WTC11 (cell line): ENCODE measurements at regions of chr2 and their contacts with region 1.

Region 1: GRCh38 chr2:198296665-198297308 is 492.4 kb downstream of the PLCL1 start:
- DNase-seq: peak; percentile 63
- ATAC-seq: peak; percentile 94
- H3K4me3 Mint-ChIP-seq: peak overlapping the region; percentile 37
- H3K27ac Mint-ChIP-seq: no peak overlapping the region
- H3K4me1 Mint-ChIP-seq: peaks cover 9% of the 10 kb centered on the region
- H3K27me3 Mint-ChIP-seq: no peaks in the 10 kb centered on the region; the same call in 1 of the 2 replicates
- CTCF ChIP-seq: peak; percentile 72

Region 2: DNA sequence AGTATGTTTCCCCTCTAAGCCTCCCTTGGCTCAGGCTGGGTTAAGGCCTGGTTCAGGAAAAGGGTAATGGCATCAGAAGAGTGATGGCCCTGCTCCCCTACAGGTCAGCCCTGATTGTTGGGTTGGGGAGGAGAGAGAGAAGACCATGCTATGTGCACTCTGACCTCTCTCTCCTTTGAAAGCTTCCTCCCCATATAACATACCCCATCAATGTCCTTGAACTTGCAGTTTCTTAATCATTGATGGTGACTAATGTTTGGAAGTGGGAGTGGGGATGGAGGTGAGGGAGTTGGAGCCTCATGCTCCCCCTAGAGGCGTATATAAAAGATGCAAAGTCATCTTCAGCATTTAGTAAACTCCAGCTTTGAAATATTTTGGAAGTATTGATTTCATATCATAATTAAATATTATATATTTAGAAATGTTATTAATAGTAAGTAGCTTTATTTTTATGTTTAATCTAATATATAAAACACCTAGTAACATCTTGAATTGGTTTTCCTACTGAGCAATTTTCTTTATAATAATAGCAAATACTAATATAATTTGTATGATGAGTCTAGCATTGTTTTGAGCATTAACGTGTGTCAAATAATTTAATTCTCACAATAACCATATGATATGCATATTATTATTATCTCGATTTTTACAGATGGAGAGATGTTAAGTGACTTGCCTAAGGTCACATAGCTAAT is 483.5 kb before region 1 on chr2:
- CTCF ChIA-PET with region 1: interaction called, 13 read pairs
- POLR2A ChIA-PET with region 1: no interaction called
- DNase-seq: no peak
- ATAC-seq: peak; percentile 62
- H3K4me3 Mint-ChIP-seq: no peak overlapping the region
- H3K27ac Mint-ChIP-seq: no peak overlapping the region
- H3K4me1 Mint-ChIP-seq: no peaks in the 10 kb centered on the region
- H3K27me3 Mint-ChIP-seq: peaks cover 8% of the 10 kb centered on the region
- CTCF ChIP-seq: peak; percentile 54

Region 3: GRCh38 chr2:198036029-198036879 is 260.5 kb before region 1 on chr2:
- CTCF ChIA-PET with region 1: no interaction called
- POLR2A ChIA-PET with region 1: no interaction called
- DNase-seq: no peak
- ATAC-seq: no peak
- H3K4me3 Mint-ChIP-seq: no peak overlapping the region
- H3K27ac Mint-ChIP-seq: no peak overlapping the region
- H3K4me1 Mint-ChIP-seq: peaks cover 9% of the 10 kb centered on the region; the same call in 1 of the 2 replicates
- H3K27me3 Mint-ChIP-seq: no peaks in the 10 kb centered on the region
- CTCF ChIP-seq: no peak

Region 4: GRCh38 chr2:198127627-198128026 is 169.2 kb before region 1 on chr2:
- CTCF ChIA-PET with region 1: interaction called, 20 read pairs
- POLR2A ChIA-PET with region 1: no interaction called
- DNase-seq: peak; percentile 33
- ATAC-seq: peak; percentile 83
- H3K4me3 Mint-ChIP-seq: no peak overlapping the region
- H3K27ac Mint-ChIP-seq: no peak overlapping the region
- H3K4me1 Mint-ChIP-seq: no peaks in the 10 kb centered on the region
- H3K27me3 Mint-ChIP-seq: no peaks in the 10 kb centered on the region
- CTCF ChIP-seq: peak; percentile 54; the same call in 1 of the 2 replicates